ENCODE measurements at regions of chr1 and their contacts with region 1.

Region 1: DNA sequence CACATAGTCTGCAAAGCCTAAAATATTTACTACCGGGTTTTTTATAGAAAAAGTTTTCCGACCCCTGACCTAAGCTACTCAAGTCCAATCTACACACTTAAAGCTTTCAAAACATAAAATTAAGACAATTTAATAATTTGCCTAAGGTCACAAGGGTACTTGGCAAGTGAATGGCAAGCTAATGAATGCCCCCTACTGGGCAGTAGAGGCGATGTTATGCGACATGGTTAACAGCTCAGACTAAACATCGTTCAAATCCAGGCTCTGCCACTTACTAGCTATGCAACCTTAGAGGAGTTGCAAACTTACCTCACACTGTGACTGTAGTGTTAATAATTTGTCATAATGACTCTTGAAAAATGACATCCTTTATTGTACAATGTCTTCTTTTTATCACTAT is 317.2 kb upstream of the NFIA start:
- DNase-seq: peak; percentile 57
- H3K4me3 Mint-ChIP-seq: no peak overlapping the region
- H3K27ac Mint-ChIP-seq: no peak overlapping the region
- H3K4me1 Mint-ChIP-seq: peaks cover 4% of the 10 kb centered on the region
- H3K27me3 Mint-ChIP-seq: peaks cover 23% of the 10 kb centered on the region
- CTCF ChIP-seq: peak; percentile 71

Region 2: DNA sequence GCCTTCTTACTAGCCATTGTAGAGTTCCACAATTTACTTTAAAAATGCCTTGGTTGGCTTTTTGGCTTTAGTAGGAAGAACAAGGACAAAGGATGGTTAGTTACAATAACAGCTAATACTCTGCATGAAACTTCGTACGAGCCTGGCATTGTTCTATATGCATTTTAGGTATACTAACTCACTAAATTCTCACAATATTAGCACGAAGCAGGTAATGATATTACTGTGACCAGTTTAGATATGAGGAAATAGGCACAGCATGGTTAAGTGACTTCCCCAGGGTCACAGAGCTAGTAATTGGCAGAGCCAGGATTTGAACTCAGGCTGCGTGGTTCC is 788.2 kb before region 1 on chr1:
- CTCF ChIA-PET with region 1: interaction called, 13 read pairs
- POLR2A ChIA-PET with region 1: no interaction called
- intact Hi-C with region 1: loop called (anchors 5 kb)
- DNase-seq: no peak
- H3K4me3 Mint-ChIP-seq: no peak overlapping the region
- H3K27ac Mint-ChIP-seq: no peak overlapping the region
- H3K4me1 Mint-ChIP-seq: no peaks in the 10 kb centered on the region
- H3K27me3 Mint-ChIP-seq: peaks cover 50% of the 10 kb centered on the region
- CTCF ChIP-seq: no peak

Region 3: GRCh38 chr1:60564916-60565750 is 200.1 kb before region 1 on chr1:
- CTCF ChIA-PET with region 1: interaction called, 3 read pairs
- POLR2A ChIA-PET with region 1: no interaction called
- intact Hi-C with region 1: loop called (anchors 1 kb)
- DNase-seq: peak; percentile 1
- H3K4me3 Mint-ChIP-seq: no peak overlapping the region
- H3K27ac Mint-ChIP-seq: no peak overlapping the region
- H3K4me1 Mint-ChIP-seq: peaks cover 6% of the 10 kb centered on the region
- H3K27me3 Mint-ChIP-seq: no peaks in the 10 kb centered on the region
- CTCF ChIP-seq: no peak

Region 4: DNA sequence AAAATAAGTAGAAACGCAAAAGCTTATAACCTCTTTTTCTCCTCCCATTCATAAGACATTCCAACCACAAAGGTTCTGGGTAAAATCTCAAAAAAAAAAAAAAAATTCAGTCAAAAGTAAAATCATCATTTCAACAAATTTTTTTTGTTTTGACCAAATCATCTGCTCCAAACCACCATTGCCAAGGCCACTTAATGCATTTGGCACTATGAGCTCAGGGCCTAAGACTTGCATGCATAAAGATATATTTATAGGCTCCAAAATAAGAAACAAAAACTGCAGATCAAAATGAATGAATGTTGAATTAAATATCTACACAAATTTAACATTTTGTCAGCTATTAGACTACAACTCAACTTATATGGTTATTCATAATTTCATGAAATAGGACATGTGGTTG is 13.9 kb before region 1 on chr1:
- CTCF ChIA-PET with region 1: interaction called, 17 read pairs
- POLR2A ChIA-PET with region 1: no interaction called
- intact Hi-C with region 1: no loop called
- DNase-seq: no peak
- H3K4me3 Mint-ChIP-seq: no peak overlapping the region
- H3K27ac Mint-ChIP-seq: no peak overlapping the region
- H3K4me1 Mint-ChIP-seq: no peaks in the 10 kb centered on the region
- H3K27me3 Mint-ChIP-seq: no peaks in the 10 kb centered on the region
- CTCF ChIP-seq: no peak